ENCODE measurements at regions of chr18 and their contacts with region 1.

Region 1: DNA sequence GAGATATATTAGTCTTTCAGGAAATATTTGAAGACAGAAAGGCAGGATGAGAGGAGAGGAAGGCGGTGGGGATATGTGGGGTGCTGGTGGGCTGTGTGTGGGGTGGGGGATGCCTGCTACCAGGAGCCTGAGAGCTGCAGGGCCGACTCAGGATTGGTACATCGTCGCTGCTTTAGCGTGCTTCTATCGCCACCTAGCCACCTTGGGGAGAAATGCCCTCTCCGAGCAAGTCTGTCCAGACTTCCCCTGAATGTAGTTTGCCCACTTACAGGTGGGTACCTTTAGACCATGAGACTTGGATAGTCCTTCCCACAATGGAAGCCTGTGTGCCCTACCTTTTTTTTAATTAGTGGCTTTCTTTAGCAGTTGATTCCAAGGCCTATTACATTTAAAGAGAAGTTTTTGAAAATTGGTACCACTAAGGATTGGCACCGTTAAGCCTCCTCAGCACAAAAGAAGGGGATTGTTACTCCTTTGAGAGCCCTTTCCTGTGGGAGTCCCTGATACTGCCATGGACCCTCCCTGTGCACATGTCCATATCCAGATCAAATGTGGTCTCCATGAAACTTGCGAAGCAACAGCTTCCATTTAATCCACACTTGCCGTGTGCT is 114.1 kb upstream of the NDUFV2 start:
- DNase-seq: peak; percentile 27 to 59 (median 51)
- H3K4me3 ChIP-seq: no peak overlapping the region
- H3K4me3 Mint-ChIP-seq: no peak overlapping the region
- H3K27ac ChIP-seq: no peak overlapping the region
- H3K27ac Mint-ChIP-seq: no peak overlapping the region
- H3K4me1 ChIP-seq: peaks cover 12 to 18% of the 10 kb centered on the region in 2 donors
- H3K4me1 Mint-ChIP-seq: peaks cover 20% of the 10 kb centered on the region
- H3K27me3 ChIP-seq: no peaks in the 10 kb centered on the region
- H3K27me3 Mint-ChIP-seq: peaks cover 1 to 6% (median 2%) of the 10 kb centered on the region in 3 donors
- CTCF ChIP-seq: peak; percentile 83

Region 2: DNA sequence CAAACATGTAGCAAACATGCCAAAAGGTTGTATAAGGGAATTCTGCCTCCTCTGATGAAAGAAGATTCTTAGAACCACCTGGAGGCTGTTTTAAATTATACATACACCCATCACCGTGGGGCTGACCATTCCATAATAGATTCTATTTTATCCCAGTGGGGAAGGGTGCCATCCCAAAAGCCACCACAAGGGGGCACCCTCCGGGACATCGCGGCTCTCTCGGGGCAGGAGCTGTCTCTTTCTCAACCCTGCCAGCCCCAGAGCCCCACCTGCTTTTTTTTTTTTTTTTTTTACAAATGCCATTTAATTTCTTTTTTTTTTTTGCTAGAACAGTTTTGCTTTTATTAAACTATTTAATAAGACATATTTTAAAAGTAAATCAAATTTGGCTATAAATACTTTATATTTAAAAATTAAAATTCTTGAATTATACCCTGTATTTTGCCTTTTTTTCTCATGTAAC is 291.6 kb before region 1 on chr18:
- intact Hi-C with region 1: loop called (anchors 5 kb)
- DNase-seq: peak; percentile 53 to 64 (median 63)
- H3K4me3 ChIP-seq: no peak overlapping the region
- H3K4me3 Mint-ChIP-seq: no peak overlapping the region
- H3K27ac ChIP-seq: no peak overlapping the region
- H3K27ac Mint-ChIP-seq: no peak overlapping the region
- H3K4me1 ChIP-seq: no peaks in the 10 kb centered on the region
- H3K4me1 Mint-ChIP-seq: peaks cover 3% of the 10 kb centered on the region
- H3K27me3 ChIP-seq: peaks cover 4 to 17% of the 10 kb centered on the region in 2 donors
- H3K27me3 Mint-ChIP-seq: peaks cover 8 to 24% (median 20%) of the 10 kb centered on the region in 3 donors
- CTCF ChIP-seq: peak; percentile 93

Measured in CD14-positive monocyte (primary cell).